PC-3 (cell line): ENCODE measurements at regions of chr1 and their contacts with region 1.

Region 1: DNA sequence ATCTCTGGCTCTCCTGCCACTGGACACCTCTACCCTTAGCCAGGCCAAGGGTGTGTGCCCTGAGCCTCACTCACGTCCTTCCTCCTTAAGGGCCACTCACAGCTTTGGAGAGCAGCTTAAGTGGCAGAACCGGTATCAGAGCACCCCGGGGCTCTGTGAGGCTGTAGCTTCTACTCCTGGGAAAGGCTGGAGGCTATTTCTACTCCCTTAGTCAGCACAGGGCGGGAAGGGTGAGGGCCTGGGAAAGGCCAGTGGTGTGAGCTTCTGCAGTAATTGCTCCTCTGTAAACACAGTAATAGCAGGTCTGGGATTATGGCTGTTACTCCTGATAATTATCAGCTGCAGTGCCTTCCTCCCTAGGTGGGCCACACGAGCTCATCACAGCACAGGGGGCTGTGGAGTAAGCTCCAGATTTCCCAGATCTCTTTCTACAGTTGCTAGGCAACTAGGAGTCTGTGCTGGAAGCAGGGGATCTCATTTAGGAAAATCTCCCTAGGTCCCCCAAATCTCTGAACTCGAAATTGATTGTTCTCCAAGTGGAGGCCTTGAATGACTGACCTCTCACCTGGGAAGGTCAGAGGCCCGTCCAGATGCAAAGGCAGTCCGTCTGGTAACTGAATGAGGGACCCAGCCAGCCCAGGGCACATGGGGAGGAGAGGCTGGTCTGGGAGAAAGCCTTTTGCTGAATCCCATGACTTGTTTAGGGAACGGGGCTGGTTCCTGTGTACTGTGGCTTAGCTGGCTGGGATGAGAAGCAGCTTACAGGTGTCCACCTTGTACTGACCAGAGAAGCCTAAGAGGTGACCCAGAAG is 29.3 kb downstream of the IER5 start:
- DNase-seq: peak; percentile 95
- ATAC-seq: peak; percentile 69
- H3K4me3 ChIP-seq: no peak overlapping the region
- H3K27ac ChIP-seq: peak overlapping the region; percentile 100
- H3K4me1 ChIP-seq: peaks cover 68% of the 10 kb centered on the region
- H3K27me3 ChIP-seq: no peaks in the 10 kb centered on the region
- CTCF ChIP-seq: no peak

Region 2: DNA sequence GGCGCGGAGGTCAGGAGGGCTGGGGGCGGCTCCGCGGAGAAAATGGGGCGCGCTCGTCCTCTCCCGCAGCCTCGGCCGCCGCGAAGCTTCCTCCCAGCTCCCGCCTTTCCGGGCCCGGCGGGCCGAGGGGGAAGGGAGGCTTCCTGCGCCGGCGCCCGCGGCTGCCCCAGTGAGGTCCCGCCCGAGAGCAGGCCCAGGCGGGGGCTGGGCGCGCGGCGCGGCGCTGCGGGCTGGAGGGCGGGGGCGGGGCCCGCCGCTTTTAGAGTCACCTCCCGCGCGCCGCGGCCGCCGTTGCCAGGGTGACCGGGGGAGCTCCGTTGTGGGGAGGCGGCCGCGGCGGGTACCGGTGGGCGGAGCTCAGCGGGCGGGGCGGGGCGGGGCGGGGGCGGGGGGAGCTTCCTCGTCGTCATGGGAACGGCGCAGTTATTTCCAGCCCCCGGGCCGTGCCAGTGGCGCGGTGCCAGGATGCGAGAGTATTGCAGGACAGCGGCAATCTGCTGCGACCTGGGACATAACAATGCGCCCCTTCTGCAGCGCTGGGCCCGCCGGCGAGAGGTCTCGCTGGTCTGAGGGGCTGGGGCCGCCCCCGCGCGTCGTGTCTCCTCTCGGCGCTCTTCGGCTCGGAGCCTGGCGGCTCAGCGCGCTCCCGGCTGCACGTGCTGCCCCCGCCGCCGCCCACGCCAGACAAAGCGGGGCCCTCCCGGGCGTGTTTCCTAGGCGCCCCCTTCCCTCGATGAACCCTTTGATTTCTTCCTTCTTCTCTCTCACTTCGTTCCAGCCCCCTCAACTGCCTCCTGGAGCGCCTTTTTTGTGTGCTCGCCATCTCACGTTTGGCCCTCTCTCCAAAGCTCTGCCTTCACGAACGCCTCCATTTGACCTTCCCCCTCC is 12.5 kb before region 1 on chr1:
- CTCF ChIA-PET with region 1: interaction called, 3 read pairs
- POLR2A ChIA-PET with region 1: interaction called, 12 read pairs
- intact Hi-C with region 1: no loop called
- DNase-seq: peak; percentile 85
- ATAC-seq: peak; percentile 72
- H3K4me3 ChIP-seq: peak overlapping the region; percentile 68
- H3K27ac ChIP-seq: peak overlapping the region; percentile 91
- H3K4me1 ChIP-seq: peaks cover 64% of the 10 kb centered on the region
- H3K27me3 ChIP-seq: no peaks in the 10 kb centered on the region
- CTCF ChIP-seq: no peak

Region 3: GRCh38 chr1:181166377-181167196 is 48.7 kb after region 1 on chr1:
- CTCF ChIA-PET with region 1: no interaction called
- POLR2A ChIA-PET with region 1: no interaction called
- intact Hi-C with region 1: no loop called
- DNase-seq: peak; percentile 80
- ATAC-seq: peak; percentile 99
- H3K4me3 ChIP-seq: no peak overlapping the region
- H3K27ac ChIP-seq: no peak overlapping the region
- H3K4me1 ChIP-seq: no peaks in the 10 kb centered on the region
- H3K27me3 ChIP-seq: no peaks in the 10 kb centered on the region
- CTCF ChIP-seq: peak; percentile 76